T-cell (primary cell): ENCODE measurements at regions of chr3 and their contacts with region 1.

Region 1: DNA sequence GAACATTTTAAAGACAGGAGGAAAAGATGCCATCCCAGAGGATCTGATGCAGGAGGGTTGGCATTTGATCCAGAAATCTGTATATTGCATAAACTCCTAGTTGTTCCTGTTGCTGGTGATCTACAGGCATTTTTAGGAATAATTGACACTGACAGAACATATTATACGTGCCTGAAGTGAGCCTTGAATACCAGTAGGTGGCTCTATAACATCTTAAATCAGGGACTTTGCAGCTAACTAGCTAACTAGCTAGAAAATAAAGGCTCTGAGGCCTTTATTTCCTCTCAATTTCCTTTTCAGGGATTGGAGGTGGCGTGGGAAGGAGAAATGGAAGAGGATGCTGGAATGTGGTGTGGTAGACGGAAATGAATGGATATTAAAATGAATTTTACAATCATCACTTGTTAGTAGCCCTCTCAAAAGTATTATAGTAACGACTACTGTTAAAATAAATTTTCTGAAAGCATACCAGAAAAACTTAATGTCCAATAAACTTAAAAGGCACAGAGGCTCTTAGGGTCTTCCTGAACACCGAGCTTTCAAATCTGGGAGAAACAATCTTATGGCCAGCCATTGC is 73.9 kb upstream of the ZBED2 start:
- DNase-seq: peak in 1 of 35 experiments; percentile 70
- ATAC-seq: peak in 3 of 4 experiments; percentile 35 to 59 (median 36)
- H3K4me3 ChIP-seq: no peak overlapping the region
- H3K4me3 Mint-ChIP-seq: peak overlapping the region in 1 of 3 donors; percentile 22
- H3K27ac ChIP-seq: no peak overlapping the region
- H3K27ac Mint-ChIP-seq: peak overlapping the region; percentile 84 to 86
- H3K4me1 ChIP-seq: peaks cover 45 to 58% of the 10 kb centered on the region in 2 experiments
- H3K4me1 Mint-ChIP-seq: peaks cover 70 to 76% (median 70%) of the 10 kb centered on the region in 3 donors
- H3K27me3 ChIP-seq: no peaks in the 10 kb centered on the region
- H3K27me3 Mint-ChIP-seq: no peaks in the 10 kb centered on the region

Region 2: DNA sequence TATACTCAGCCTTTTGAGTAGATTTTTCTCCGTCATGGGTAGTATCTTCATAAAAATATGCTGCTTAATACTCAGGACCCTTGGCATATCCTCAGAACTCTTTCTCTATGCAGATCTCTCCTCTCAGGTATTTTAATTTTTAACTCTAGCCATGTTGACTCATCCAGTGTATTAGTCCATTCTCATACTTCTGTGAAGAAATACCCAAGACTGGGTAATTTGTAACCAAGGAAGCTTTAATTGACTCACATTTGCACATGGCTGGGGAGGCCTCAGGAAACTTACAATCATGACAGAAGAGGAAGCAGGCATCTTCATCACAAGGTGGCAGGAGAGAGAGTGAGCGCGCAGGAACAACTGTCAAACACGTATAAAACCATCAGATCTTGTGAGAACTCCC is 256.3 kb before region 1 on chr3:
- CTCF ChIA-PET with region 1: no interaction called
- POLR2A ChIA-PET with region 1: no interaction called
- DNase-seq: no peak
- ATAC-seq: no peak
- H3K4me3 ChIP-seq: no peak overlapping the region
- H3K4me3 Mint-ChIP-seq: no peak overlapping the region
- H3K27ac ChIP-seq: no peak overlapping the region
- H3K27ac Mint-ChIP-seq: no peak overlapping the region
- H3K4me1 ChIP-seq: no peaks in the 10 kb centered on the region
- H3K4me1 Mint-ChIP-seq: no peaks in the 10 kb centered on the region
- H3K27me3 ChIP-seq: no peaks in the 10 kb centered on the region
- H3K27me3 Mint-ChIP-seq: peaks cover under 1 to 11% of the 10 kb centered on the region in 2 donors

Region 3: DNA sequence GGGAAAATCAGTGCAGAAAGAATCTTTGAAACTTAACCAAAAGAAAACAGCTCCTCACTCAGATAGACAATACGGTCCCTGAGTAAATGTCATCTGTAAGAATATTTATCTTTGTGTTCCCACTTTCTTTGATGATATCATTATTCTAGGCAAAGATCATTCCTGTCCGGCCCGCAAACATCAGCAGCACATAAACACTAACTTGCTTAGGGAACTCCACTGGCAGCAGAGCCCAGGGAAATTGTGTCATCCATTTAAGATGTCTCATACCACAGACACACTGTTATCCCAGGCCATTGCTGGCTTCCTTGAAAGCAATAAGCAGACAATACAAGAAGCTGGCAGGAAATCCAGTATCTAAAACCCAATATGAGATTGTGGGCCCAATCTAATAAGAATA is 147.1 kb before region 1 on chr3:
- CTCF ChIA-PET with region 1: no interaction called
- POLR2A ChIA-PET with region 1: no interaction called
- DNase-seq: no peak
- ATAC-seq: no peak
- H3K4me3 ChIP-seq: no peak overlapping the region
- H3K4me3 Mint-ChIP-seq: no peak overlapping the region
- H3K27ac ChIP-seq: no peak overlapping the region
- H3K27ac Mint-ChIP-seq: no peak overlapping the region
- H3K4me1 ChIP-seq: no peaks in the 10 kb centered on the region
- H3K4me1 Mint-ChIP-seq: no peaks in the 10 kb centered on the region
- H3K27me3 ChIP-seq: no peaks in the 10 kb centered on the region
- H3K27me3 Mint-ChIP-seq: no peaks in the 10 kb centered on the region

Region 4: DNA sequence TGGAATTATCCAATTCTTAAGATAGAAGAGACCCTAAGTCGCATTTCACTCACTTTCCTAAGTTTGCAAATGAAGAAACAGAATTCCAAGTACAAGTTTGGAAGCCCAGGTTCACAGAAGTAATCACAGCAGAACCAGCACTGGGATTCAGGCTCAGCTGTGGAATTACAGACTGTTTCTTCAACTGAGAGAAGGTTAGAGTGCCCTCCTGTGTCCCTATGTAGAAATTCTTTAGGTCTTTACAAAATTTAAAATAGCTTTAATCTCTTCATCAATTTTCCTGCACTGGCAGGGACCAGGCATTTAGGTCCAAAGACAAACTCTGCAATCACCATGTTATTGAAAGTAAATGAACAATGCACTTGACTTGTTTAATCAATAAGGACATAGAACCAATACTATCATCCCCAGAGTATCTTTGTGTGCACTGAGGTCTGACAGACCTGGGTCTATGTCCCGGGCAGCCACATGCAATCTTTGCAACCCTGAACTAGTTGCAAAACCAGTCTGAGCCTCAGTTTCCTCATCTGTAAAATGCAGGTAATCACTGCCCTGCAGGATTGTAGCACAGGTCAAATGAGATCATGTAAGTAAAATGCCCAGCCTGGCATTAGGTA is 22.4 kb after region 1 on chr3:
- CTCF ChIA-PET with region 1: interaction called, 4 to 40 read pairs
- POLR2A ChIA-PET with region 1: interaction called, 3 to 7 read pairs
- DNase-seq: peak in 1 of 35 experiments; percentile 66
- ATAC-seq: peak in 3 of 4 experiments; percentile 30 to 70 (median 46)
- H3K4me3 ChIP-seq: no peak overlapping the region
- H3K4me3 Mint-ChIP-seq: no peak overlapping the region
- H3K27ac ChIP-seq: no peak overlapping the region
- H3K27ac Mint-ChIP-seq: no peak overlapping the region
- H3K4me1 ChIP-seq: peaks cover 3 to 12% of the 10 kb centered on the region in 2 experiments
- H3K4me1 Mint-ChIP-seq: peaks cover 53 to 67% (median 60%) of the 10 kb centered on the region in 3 donors
- H3K27me3 ChIP-seq: no peaks in the 10 kb centered on the region
- H3K27me3 Mint-ChIP-seq: no peaks in the 10 kb centered on the region

Region 5: GRCh38 chr3:111735271-111735758 is 66.3 kb after region 1 on chr3:
- CTCF ChIA-PET with region 1: no interaction called
- POLR2A ChIA-PET with region 1: no interaction called
- DNase-seq: no peak
- ATAC-seq: no peak
- H3K4me3 ChIP-seq: no peak overlapping the region
- H3K4me3 Mint-ChIP-seq: no peak overlapping the region
- H3K27ac ChIP-seq: no peak overlapping the region
- H3K27ac Mint-ChIP-seq: no peak overlapping the region
- H3K4me1 ChIP-seq: no peaks in the 10 kb centered on the region
- H3K4me1 Mint-ChIP-seq: no peaks in the 10 kb centered on the region
- H3K27me3 ChIP-seq: no peaks in the 10 kb centered on the region
- H3K27me3 Mint-ChIP-seq: no peaks in the 10 kb centered on the region

Region 6: DNA sequence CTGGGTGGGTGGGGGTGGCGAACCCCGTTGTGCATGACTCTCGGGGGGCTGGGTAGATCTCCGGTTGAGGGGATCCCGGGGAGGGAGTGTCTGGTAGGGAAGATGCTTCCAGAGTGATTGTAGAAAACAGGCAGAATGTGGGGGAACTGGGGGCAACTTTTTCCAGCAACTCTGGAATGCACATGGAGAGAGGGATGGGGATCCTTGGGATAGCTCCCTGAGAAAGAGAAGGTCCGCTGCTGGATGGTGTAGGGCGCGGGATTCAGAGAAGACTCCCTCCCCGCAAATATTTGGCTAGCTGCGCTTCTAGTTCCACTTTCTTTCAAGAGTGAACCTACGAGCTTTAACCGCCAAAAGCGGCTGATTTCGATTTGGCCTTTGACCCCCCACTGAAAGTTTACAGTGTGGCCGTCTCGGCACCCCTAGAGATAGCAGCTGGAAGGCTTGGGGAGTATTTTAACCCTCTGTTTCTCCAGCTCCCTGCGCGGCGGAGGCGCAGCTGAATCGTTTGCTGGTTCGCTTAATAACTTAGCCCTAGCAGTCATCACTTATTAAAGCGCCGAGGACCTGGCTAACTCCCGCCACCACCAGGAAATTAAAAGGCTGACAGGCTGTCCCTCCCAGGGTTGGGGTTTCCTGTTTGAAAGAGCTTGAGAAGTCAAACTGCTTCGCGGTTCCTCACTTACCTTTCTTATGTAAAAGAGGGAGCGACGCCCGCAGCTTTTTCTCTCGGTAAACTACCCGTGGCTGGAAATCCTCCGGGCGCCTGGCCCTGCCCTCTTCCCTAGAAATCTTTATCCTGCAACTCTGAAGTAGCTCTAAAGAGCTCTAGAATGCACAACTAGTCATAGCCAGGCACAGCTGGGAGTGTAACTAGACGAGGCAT is 191.2 kb after region 1 on chr3:
- CTCF ChIA-PET with region 1: interaction called, 4 to 11 read pairs
- POLR2A ChIA-PET with region 1: no interaction called
- DNase-seq: peak; percentile 14 to 77 (median 36)
- ATAC-seq: peak; percentile 60 to 65 (median 64)
- H3K4me3 ChIP-seq: peak overlapping the region; percentile 67 to 95
- H3K4me3 Mint-ChIP-seq: peak overlapping the region; percentile 87 to 92 (median 91)
- H3K27ac ChIP-seq: peak overlapping the region; percentile 57
- H3K27ac Mint-ChIP-seq: peak overlapping the region; percentile 25 to 87
- H3K4me1 ChIP-seq: peaks cover 7 to 15% of the 10 kb centered on the region in 2 experiments
- H3K4me1 Mint-ChIP-seq: peaks cover 16 to 20% (median 19%) of the 10 kb centered on the region in 3 donors
- H3K27me3 ChIP-seq: peaks cover 2 to 12% of the 10 kb centered on the region in 2 experiments
- H3K27me3 Mint-ChIP-seq: peaks cover 20 to 25% of the 10 kb centered on the region in 2 donors

Region 7: DNA sequence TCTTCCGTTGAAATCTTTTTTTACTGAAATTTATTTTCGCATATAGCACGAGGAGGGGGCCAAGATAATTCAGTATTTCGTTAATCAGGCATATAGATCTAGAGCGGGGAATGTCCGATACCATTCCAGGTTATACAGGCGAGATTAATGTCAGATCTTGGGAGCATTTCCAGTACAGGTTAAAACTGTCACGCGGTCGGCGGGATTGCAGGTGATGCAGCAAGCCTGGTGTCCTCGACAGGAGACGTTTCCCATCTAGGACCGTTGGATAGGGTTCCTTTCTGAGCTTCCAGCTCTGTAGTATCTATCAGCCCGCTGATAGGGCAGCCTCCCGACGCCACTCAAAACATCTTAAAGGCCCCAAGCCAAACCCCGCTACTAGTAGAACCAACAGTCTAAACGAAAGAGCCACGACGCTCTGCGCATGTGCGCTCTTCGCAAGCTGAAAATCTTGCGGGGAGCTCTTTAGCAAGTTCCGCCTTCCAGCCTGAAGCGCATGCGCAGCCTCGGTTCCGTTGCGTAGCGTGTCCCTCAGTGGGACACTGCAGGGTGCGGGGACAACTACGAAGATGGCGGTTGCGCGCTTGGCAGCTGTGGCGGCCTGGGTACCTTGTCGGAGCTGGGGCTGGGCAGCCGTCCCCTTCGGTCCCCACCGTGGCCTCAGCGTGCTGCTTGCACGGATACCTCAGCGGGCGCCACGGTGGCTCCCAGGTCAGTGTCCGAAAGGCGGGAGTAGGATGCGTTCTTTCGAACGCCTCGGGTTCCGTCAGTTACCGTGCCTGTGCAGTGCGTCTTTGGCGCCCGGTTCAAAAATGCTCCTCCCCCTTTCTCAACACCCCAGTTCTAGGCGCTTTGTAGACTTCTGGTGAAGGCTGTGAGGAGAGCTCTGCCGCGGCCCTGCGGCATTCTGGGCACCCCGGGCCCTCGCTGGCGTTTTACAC is 309.8 kb after region 1 on chr3 and contains the start of gene ABHD10:
- CTCF ChIA-PET with region 1: interaction called, 5 to 26 read pairs
- POLR2A ChIA-PET with region 1: interaction called in 1 of 2 experiments, 3 read pairs
- DNase-seq: peak; percentile 88 to 100 (median 96)
- ATAC-seq: peak; percentile 96 to 97 (median 96)
- H3K4me3 ChIP-seq: peak within 1 kb of the TSS; percentile 73 to 96
- H3K4me3 Mint-ChIP-seq: peak within 1 kb of the TSS; percentile 91 to 94 (median 92)
- H3K27ac ChIP-seq: peak within 1 kb of the TSS; percentile 74
- H3K27ac Mint-ChIP-seq: peak within 1 kb of the TSS; percentile 89 to 92
- H3K4me1 ChIP-seq: peaks cover 9 to 10% of the 10 kb centered on the region in 2 experiments
- H3K4me1 Mint-ChIP-seq: peaks cover 46 to 48% (median 46%) of the 10 kb centered on the region in 3 donors
- H3K27me3 ChIP-seq: no peaks in the 10 kb centered on the region
- H3K27me3 Mint-ChIP-seq: no peaks in the 10 kb centered on the region
- total RNA-seq, gene ABHD10: 18.3 to 31.8 (median 28.1) TPM

Region 8: GRCh38 chr3:112498914-112499711 is 830.1 kb after region 1 on chr3 and contains the start of gene BTLA:
- CTCF ChIA-PET with region 1: interaction called in 1 of 2 experiments, 15 read pairs
- POLR2A ChIA-PET with region 1: no interaction called
- DNase-seq: peak in 19 of 35 experiments; percentile 4 to 64 (median 15)
- ATAC-seq: peak; percentile 70 to 84 (median 81)
- H3K4me3 ChIP-seq: peak within 1 kb of the TSS; percentile 44 to 85
- H3K4me3 Mint-ChIP-seq: peak within 1 kb of the TSS; percentile 92 to 98 (median 95)
- H3K27ac ChIP-seq: peak within 1 kb of the TSS; percentile 35
- H3K27ac Mint-ChIP-seq: peak within 1 kb of the TSS; percentile 94 to 98
- H3K4me1 ChIP-seq: peaks cover 9 to 29% of the 10 kb centered on the region in 2 experiments
- H3K4me1 Mint-ChIP-seq: peaks cover 55 to 62% (median 56%) of the 10 kb centered on the region in 3 donors
- H3K27me3 ChIP-seq: no peaks in the 10 kb centered on the region
- H3K27me3 Mint-ChIP-seq: no peaks in the 10 kb centered on the region
- total RNA-seq, gene BTLA: 11.5 to 16.9 (median 15.2) TPM